Mammary epithelial cell (primary cell): ENCODE measurements at regions of chr7 and their contacts with region 1.

Region 1: GRCh38 chr7:41148521-41148951 is 554.4 kb downstream of the INHBA start:
- DNase-seq: peak; percentile 98
- H3K4me3 ChIP-seq: no peak overlapping the region
- H3K27ac ChIP-seq: peak overlapping the region; percentile 99
- H3K4me1 ChIP-seq: peaks cover 46% of the 10 kb centered on the region
- H3K27me3 ChIP-seq: no peaks in the 10 kb centered on the region
- CTCF ChIP-seq: no peak

Region 2: GRCh38 chr7:41097501-41097900 is 51.0 kb before region 1 on chr7:
- CTCF ChIA-PET with region 1: no interaction called
- dilution Hi-C with region 1: no loop called
- in situ Hi-C with region 1: no loop called
- intact Hi-C with region 1: loop called (anchors 1 kb)
- DNase-seq: peak; percentile 95
- H3K4me3 ChIP-seq: no peak overlapping the region
- H3K27ac ChIP-seq: peak overlapping the region; percentile 81
- H3K4me1 ChIP-seq: peaks cover 22% of the 10 kb centered on the region
- H3K27me3 ChIP-seq: no peaks in the 10 kb centered on the region
- CTCF ChIP-seq: no peak

Region 3: DNA sequence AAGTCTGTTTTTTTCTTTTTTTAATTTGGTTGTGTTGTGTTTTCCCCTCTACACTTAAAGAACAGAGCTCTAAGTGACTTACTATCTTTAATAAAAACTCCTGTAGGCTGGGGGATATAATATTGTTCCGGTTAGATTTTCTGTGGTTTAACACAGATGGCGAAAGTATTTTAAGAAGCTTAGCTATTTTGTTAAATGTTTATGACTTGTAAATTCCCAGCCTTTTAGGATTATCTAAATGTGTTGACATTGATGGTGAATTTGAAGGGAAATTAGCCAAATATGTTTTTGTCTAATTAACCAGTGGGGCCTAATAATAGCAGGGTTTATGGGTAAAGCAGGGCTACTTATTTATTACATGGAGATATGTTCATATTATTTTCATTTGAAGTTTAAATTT is 15.9 kb after region 1 on chr7:
- CTCF ChIA-PET with region 1: no interaction called
- dilution Hi-C with region 1: no loop called
- in situ Hi-C with region 1: no loop called
- intact Hi-C with region 1: no loop called
- DNase-seq: no peak
- H3K4me3 ChIP-seq: no peak overlapping the region
- H3K27ac ChIP-seq: no peak overlapping the region
- H3K4me1 ChIP-seq: no peaks in the 10 kb centered on the region
- H3K27me3 ChIP-seq: no peaks in the 10 kb centered on the region
- CTCF ChIP-seq: no peak

Region 4: DNA sequence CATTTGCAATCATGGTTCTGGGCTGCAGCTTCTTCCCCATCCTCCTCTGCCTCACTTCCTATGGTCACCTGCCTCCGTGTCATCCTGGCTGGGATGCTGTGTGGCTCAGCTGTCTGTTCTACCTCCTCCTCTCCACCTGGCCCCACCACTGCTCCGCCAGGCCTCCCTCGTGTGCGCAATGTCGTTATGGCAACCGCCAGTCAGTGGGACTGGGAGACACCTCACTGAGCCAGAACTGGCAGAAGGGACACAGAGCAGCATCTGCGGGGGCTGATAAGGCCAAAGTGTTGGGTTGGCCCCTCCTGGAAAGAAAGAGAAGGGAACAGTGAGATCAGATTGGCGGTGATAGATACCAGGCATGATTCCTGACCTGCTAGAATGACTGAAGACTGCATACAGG is 26.9 kb after region 1 on chr7:
- CTCF ChIA-PET with region 1: no interaction called
- dilution Hi-C with region 1: no loop called
- in situ Hi-C with region 1: no loop called
- intact Hi-C with region 1: no loop called
- DNase-seq: no peak
- H3K4me3 ChIP-seq: no peak overlapping the region
- H3K27ac ChIP-seq: no peak overlapping the region
- H3K4me1 ChIP-seq: no peaks in the 10 kb centered on the region
- H3K27me3 ChIP-seq: no peaks in the 10 kb centered on the region
- CTCF ChIP-seq: no peak

Region 5: GRCh38 chr7:41425926-41426325 is 277.4 kb after region 1 on chr7:
- CTCF ChIA-PET with region 1: no interaction called
- dilution Hi-C with region 1: no loop called
- in situ Hi-C with region 1: no loop called
- intact Hi-C with region 1: no loop called
- DNase-seq: peak; percentile 84
- H3K4me3 ChIP-seq: no peak overlapping the region
- H3K27ac ChIP-seq: peak overlapping the region; percentile 52
- H3K4me1 ChIP-seq: peaks cover 11% of the 10 kb centered on the region
- H3K27me3 ChIP-seq: no peaks in the 10 kb centered on the region
- CTCF ChIP-seq: no peak

Region 6: DNA sequence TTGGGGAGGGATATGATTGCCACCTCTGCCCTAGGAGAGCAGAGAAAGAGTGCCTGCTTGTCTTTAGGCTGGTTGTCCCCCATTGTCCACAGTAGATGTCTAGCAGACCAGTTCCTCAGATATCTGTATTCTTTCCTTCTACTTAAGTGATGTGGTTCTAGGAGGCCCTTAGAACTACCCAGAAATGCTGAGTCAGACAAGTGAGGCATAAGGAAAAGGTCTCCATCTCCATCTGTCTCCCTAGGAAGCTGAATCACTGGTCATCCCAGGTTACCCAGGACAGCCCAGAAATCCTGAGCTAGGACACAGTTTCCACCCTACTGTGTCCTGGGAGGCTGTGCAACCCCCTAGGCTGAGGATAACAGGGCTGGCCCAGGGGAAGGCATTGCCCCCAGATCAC is 647.8 kb after region 1 on chr7:
- CTCF ChIA-PET with region 1: no interaction called
- dilution Hi-C with region 1: no loop called
- in situ Hi-C with region 1: no loop called
- intact Hi-C with region 1: no loop called
- DNase-seq: no peak
- H3K4me3 ChIP-seq: no peak overlapping the region
- H3K27ac ChIP-seq: no peak overlapping the region
- H3K4me1 ChIP-seq: no peaks in the 10 kb centered on the region
- H3K27me3 ChIP-seq: no peaks in the 10 kb centered on the region
- CTCF ChIP-seq: no peak